ACHN (cell line): ENCODE measurements at regions of chr16 and their contacts with region 1.

Region 1: DNA sequence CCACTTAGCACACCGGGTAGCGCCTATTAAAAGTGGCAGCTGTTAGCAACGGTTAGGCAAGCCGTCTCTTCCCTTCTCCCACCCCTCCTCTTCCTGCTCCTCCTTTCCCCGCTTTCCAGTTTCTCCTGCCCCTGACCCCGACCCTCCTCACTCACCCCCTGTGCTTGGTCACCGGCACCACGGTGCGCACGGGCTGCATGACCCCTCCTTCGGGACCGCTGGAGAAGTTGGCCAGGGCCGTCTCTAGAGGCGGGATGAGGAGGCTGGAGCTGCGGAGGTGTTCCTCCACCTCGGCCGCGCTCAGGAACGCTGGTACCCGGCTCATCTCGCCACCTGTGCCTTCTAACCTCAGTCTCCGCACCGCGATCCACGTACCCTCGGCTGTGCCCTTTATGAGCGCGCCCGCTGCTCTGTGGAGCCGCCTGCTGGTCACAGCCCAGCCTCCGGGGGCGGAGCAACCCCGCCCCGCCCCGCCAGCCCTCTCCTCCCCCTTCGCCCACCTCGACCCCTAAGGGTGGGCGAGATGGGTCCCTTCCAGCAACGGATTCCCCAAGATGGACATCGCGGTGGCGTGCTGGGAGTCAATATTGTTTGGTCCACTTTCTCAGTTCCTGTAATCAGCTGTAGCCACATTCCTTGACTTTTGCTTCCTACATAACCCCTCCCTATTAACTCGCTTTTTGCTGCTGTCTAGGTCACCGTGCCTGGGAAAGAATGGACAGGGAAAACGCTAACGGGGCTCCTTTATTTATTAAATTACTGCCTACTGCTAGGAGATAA is at the start of gene CRYM:
- DNase-seq: peak; percentile 79

Region 2: DNA sequence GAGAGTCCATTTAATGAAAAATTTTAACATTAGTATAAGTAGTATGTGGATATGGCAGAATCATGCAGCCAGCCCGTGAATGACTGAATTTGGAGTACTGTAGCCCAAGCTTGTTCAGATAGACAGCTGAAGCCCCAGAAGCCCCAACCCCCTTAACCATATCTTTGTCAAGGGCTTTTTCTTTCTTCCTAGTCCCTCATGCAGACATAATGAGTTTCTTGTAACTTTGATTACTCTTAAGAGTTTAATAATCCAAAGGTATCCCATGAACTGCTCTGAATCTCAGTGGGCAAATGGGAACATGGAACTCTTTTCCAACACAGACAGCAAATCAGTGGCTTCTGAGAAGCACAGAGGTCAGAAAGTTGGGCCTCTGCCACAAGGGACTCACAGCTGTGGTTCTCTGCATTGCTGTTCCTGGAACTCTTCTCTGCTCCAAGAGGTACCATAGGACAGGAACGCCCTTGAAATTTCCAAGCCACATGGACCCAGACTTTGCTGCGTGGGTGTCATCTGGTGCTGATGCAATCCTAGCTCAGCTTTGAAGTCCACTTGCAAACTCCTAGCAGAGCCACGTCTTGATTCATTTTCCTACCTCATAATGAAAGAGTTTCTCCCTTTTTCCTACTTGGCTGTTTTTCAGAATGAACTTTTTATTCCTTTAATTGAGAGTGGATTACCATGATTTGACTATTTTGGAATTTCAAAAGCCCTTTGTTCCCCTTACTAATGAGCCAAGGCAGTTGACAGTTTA is 359.5 kb before region 1 on chr16:
- in situ Hi-C with region 1: no loop called
- DNase-seq: no peak

Region 3: GRCh38 chr16:21194771-21195301 is 83.3 kb before region 1 on chr16:
- in situ Hi-C with region 1: loop called (anchors 25 kb)
- DNase-seq: no peak